ENCODE measurements at regions of chr10 and their contacts with region 1.

Region 1: GRCh38 chr10:14486777-14487487 is 156.2 kb upstream of the FRMD4A start:
- DNase-seq: no peak
- H3K4me3 ChIP-seq: no peak overlapping the region
- H3K27me3 ChIP-seq: peaks cover 21% of the 10 kb centered on the region
- CTCF ChIP-seq: no peak

Region 2: GRCh38 chr10:14500172-14500765 is 13.3 kb after region 1 on chr10:
- CTCF ChIA-PET with region 1: interaction called, 16 read pairs
- POLR2A ChIA-PET with region 1: no interaction called
- DNase-seq: no peak
- H3K4me3 ChIP-seq: no peak overlapping the region
- H3K27me3 ChIP-seq: no peaks in the 10 kb centered on the region
- CTCF ChIP-seq: no peak